Breast epithelium (tissue), 4 donors: ENCODE measurements at regions of chr14 and their contacts with region 1.

Region 1: GRCh38 chr14:64855721-64856528 is 23.8 kb downstream of the SPTB start:
- DNase-seq: no peak
- H3K4me3 ChIP-seq: no peak overlapping the region
- H3K27ac ChIP-seq: no peak overlapping the region
- H3K4me1 ChIP-seq: no peaks in the 10 kb centered on the region
- H3K27me3 ChIP-seq: no peaks in the 10 kb centered on the region
- CTCF ChIP-seq: no peak
- POLR2A ChIP-seq: no peak

Region 2: GRCh38 chr14:64817631-64818030 is 38.3 kb before region 1 on chr14:
- intact Hi-C with region 1: loop called (anchors 2 kb)
- DNase-seq: no peak
- H3K4me3 ChIP-seq: no peak overlapping the region
- H3K27ac ChIP-seq: no peak overlapping the region
- H3K4me1 ChIP-seq: no peaks in the 10 kb centered on the region
- H3K27me3 ChIP-seq: no peaks in the 10 kb centered on the region
- CTCF ChIP-seq: no peak
- POLR2A ChIP-seq: no peak

Region 3: DNA sequence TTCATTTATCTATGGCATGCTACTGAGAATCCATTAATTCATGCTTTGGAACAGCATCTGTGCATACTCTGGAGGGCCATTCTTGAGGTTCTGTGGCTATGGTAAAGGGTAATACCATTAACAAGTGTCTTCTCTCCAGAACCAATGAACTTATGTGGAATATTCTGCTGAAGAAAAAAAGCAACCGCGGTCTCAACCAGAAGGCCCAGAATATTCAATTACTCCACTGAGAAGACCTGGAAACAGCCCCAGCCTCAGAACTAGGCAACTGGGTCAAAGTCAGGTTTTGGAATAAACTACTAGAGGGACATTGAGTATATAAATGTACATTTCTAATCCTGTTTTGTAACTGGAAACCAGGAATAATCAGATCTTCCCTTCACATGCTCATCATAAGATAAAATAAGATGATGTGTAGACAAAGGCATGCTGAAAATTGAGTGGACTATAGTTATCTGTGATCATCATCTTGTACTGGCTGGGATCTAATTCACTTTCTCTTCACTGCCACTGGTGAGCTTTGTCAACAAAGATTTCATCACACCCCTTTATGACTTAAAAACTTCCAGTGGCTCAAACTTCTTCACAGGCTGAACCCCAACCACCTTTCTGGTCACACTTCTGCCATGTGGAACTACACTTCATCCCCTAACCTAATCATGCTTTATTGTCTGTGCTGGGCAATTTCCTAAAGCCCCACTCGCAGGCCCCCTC is 17.7 kb after region 1 on chr14:
- intact Hi-C with region 1: no loop called
- DNase-seq: no peak
- H3K4me3 ChIP-seq: no peak overlapping the region
- H3K27ac ChIP-seq: no peak overlapping the region
- H3K4me1 ChIP-seq: no peaks in the 10 kb centered on the region
- H3K27me3 ChIP-seq: peaks cover 0 to 3% of the 10 kb centered on the region in 2 donors
- CTCF ChIP-seq: no peak
- POLR2A ChIP-seq: no peak